Naive thymus-derived CD4-positive, alpha-beta T cell (primary cell): ENCODE measurements at regions of chr17 and their contacts with region 1.

Region 1: GRCh38 chr17:16215273-16215964 is at the start of gene NCOR1:
- DNase-seq: peak; percentile 76 to 89 (median 82)
- ATAC-seq: peak; percentile 93
- H3K4me3 ChIP-seq: peak within 1 kb of the TSS; percentile 76
- H3K4me3 Mint-ChIP-seq: peak within 1 kb of the TSS; percentile 89 to 99 (median 96)
- H3K27ac ChIP-seq: peak within 1 kb of the TSS; percentile 91
- H3K27ac Mint-ChIP-seq: peak within 1 kb of the TSS; percentile 58 to 98 (median 93)
- H3K4me1 ChIP-seq: peaks cover 22 to 29% of the 10 kb centered on the region in 2 donors
- H3K4me1 Mint-ChIP-seq: peaks cover 25 to 69% (median 50%) of the 10 kb centered on the region in 7 donors
- H3K27me3 ChIP-seq: no peaks in the 10 kb centered on the region
- H3K27me3 Mint-ChIP-seq: no peaks in the 10 kb centered on the region
- total RNA-seq, gene NCOR1: 131 to 169 (median 149) TPM

Region 2: GRCh38 chr17:16181581-16181980 is 33.8 kb before region 1 on chr17:
- CTCF ChIA-PET with region 1: no interaction called
- POLR2A ChIA-PET with region 1: no interaction called
- intact Hi-C with region 1: loop called in 1 of 2 experiments (anchors 5 kb)
- DNase-seq: no peak
- ATAC-seq: no peak
- H3K4me3 ChIP-seq: no peak overlapping the region
- H3K4me3 Mint-ChIP-seq: no peak overlapping the region
- H3K27ac ChIP-seq: no peak overlapping the region
- H3K27ac Mint-ChIP-seq: no peak overlapping the region
- H3K4me1 ChIP-seq: no peaks in the 10 kb centered on the region
- H3K4me1 Mint-ChIP-seq: peaks cover 21 to 67% (median 56%) of the 10 kb centered on the region in 7 donors
- H3K27me3 ChIP-seq: no peaks in the 10 kb centered on the region
- H3K27me3 Mint-ChIP-seq: no peaks in the 10 kb centered on the region

Region 3: DNA sequence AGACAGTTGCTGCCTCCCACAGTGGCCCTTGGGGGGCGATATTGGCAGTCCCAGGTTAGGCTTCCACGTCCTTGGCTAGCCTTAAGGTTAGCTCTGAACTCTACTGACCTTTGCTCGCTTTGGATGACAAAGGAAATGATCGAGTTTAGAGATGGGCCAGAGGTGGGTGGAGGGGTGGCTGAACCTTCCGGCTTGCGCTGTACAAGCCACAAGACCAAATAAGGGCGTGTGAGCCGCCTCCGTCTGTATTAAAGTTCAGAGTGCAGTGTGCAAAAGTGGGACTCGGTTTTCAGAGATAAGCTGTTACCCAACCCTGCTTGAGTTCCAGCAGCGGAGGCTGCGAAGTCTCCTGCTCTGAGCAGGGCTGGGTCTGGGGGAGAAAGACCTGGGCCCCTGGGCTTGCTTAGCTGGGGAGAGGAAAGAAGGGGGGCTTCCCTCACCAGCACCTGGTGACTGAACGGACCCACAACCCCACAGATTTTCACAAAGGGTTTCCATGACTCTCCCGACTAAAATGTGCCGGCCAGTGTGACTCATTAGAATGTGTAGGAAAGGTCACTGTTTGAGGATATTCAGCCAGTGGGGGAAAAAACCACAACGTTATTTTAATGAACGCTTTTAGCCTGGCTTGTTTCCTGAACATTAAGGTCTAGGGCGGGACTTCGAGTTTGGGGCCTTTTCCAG is 70.7 kb after region 1 on chr17:
- CTCF ChIA-PET with region 1: no interaction called
- POLR2A ChIA-PET with region 1: interaction called, 10 read pairs
- intact Hi-C with region 1: loop called (anchors 1 to 2 kb)
- DNase-seq: peak; percentile 41 to 76 (median 72)
- ATAC-seq: peak; percentile 95
- H3K4me3 ChIP-seq: peak overlapping the region; percentile 53
- H3K4me3 Mint-ChIP-seq: peak overlapping the region; percentile 71 to 85 (median 80)
- H3K27ac ChIP-seq: peak overlapping the region; percentile 81
- H3K27ac Mint-ChIP-seq: peak overlapping the region; percentile 93 to 99 (median 97)
- H3K4me1 ChIP-seq: peaks cover 36 to 50% of the 10 kb centered on the region in 2 donors
- H3K4me1 Mint-ChIP-seq: peaks cover 41 to 68% (median 62%) of the 10 kb centered on the region in 7 donors
- H3K27me3 ChIP-seq: no peaks in the 10 kb centered on the region
- H3K27me3 Mint-ChIP-seq: no peaks in the 10 kb centered on the region

Region 4: DNA sequence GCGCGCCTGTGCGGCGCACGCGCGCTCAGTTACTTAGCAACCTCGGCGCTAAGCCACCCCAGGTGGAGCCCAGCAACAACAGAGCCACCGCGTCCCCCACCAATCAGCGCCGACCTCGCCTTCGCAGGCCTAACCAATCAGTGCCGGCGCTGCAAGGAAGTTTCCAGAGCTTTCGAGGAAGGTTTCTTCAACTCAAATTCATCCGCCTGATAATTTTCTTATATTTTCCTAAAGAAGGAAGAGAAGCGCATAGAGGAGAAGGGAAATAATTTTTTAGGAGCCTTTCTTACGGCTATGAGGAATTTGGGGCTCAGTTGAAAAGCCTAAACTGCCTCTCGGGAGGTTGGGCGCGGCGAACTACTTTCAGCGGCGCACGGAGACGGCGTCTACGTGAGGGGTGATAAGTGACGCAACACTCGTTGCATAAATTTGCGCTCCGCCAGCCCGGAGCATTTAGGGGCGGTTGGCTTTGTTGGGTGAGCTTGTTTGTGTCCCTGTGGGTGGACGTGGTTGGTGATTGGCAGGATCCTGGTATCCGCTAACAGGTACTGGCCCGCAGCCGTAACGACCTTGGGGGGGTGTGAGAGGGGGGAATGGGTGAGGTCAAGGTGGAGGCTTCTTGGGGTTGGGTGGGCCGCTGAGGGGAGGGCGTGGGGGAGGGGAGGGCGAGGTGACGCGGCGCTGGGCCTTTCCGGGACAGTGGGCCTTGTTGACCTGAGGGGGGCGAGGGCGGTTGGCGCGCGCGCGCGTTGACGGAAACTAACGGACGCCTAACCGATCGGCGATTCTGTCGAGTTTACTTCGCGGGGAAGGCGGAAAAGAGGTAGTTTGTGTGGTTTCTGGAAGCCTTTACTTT is 165.4 kb after region 1 on chr17 and contains the start of gene UBB:
- CTCF ChIA-PET with region 1: interaction called, 3 read pairs
- POLR2A ChIA-PET with region 1: interaction called, 10 read pairs
- intact Hi-C with region 1: loop called (anchors 1 kb)
- DNase-seq: peak; percentile 83 to 97 (median 94)
- ATAC-seq: peak; percentile 96
- H3K4me3 ChIP-seq: peak within 1 kb of the TSS; percentile 66
- H3K4me3 Mint-ChIP-seq: peak within 1 kb of the TSS; percentile 85 to 99 (median 95)
- H3K27ac ChIP-seq: peak within 1 kb of the TSS; percentile 86
- H3K27ac Mint-ChIP-seq: peak within 1 kb of the TSS; percentile 93 to 100 (median 97)
- H3K4me1 ChIP-seq: peaks cover 6 to 13% of the 10 kb centered on the region in 2 donors
- H3K4me1 Mint-ChIP-seq: peaks cover 22 to 48% (median 39%) of the 10 kb centered on the region in 7 donors
- H3K27me3 ChIP-seq: no peaks in the 10 kb centered on the region
- H3K27me3 Mint-ChIP-seq: peaks cover 0 to 5% (median 0%) of the 10 kb centered on the region in 5 donors
- total RNA-seq, gene UBB: 537 to 1,283 (median 621) TPM

Region 5: GRCh38 chr17:16438557-16439302 is 223.3 kb after region 1 on chr17:
- CTCF ChIA-PET with region 1: no interaction called
- POLR2A ChIA-PET with region 1: no interaction called
- intact Hi-C with region 1: loop called (anchors 1 to 2 kb)
- DNase-seq: peak; percentile 81 to 97 (median 95)
- ATAC-seq: peak; percentile 93
- H3K4me3 ChIP-seq: peak overlapping the region; percentile 89
- H3K4me3 Mint-ChIP-seq: peak overlapping the region; percentile 91 to 100 (median 100)
- H3K27ac ChIP-seq: peak overlapping the region; percentile 92
- H3K27ac Mint-ChIP-seq: peak overlapping the region; percentile 91 to 100 (median 99)
- H3K4me1 ChIP-seq: peaks cover 27 to 41% of the 10 kb centered on the region in 2 donors
- H3K4me1 Mint-ChIP-seq: peaks cover 30 to 55% (median 47%) of the 10 kb centered on the region in 7 donors
- H3K27me3 ChIP-seq: no peaks in the 10 kb centered on the region
- H3K27me3 Mint-ChIP-seq: no peaks in the 10 kb centered on the region

Region 6: DNA sequence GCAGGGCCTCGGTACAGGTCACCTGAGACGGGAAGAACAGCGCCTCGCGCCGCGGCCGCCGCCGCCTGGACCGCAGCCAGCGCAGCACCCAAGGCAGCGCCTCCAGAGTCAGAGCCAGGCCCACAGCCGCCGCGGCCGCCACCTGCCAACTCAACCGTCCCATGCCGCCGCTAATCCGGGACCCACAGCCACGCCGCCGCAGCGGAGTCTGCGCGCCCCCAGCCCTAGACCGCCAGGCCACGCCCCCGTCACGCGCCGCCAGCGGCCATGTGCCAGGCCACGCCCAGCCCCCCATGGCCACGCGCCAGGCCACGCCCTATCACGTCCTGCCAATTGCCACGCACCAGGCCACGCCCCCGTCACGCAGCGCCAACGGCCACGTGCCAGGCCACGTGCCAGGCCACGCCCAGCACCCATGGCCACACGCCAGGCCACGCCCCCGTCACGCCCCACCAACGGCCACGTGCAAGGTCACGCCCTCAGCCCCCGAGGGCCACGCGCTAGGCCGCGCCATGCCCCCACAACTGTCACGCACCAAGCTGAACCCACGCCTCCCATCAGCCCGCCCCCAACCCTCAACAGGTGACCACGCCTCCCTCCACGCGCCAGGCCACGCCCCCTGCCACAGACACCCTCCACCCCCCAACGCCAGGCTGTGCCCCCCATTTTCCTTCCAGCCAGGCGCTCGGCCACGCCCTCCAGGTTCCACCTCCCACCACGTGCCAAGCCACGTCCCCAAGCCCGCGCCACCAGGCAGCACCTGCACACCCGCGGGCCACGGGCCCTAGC is 990.9 kb after region 1 on chr17 and contains the start of gene PLD6:
- CTCF ChIA-PET with region 1: no interaction called
- POLR2A ChIA-PET with region 1: no interaction called
- intact Hi-C with region 1: loop called in 1 of 2 experiments (anchors 5 kb)
- DNase-seq: peak; percentile 88 to 96 (median 93)
- ATAC-seq: peak; percentile 92
- H3K4me3 ChIP-seq: peak within 1 kb of the TSS; percentile 68
- H3K4me3 Mint-ChIP-seq: peak within 1 kb of the TSS; percentile 87 to 93 (median 89)
- H3K27ac ChIP-seq: peak within 1 kb of the TSS; percentile 70
- H3K27ac Mint-ChIP-seq: peak within 1 kb of the TSS; percentile 75 to 96 (median 91)
- H3K4me1 ChIP-seq: peaks cover 17 to 30% of the 10 kb centered on the region in 2 donors
- H3K4me1 Mint-ChIP-seq: peaks cover 12 to 32% (median 19%) of the 10 kb centered on the region in 7 donors
- H3K27me3 ChIP-seq: no peaks in the 10 kb centered on the region
- H3K27me3 Mint-ChIP-seq: no peaks in the 10 kb centered on the region
- total RNA-seq, gene PLD6: 6.2 to 13.9 (median 12.1) TPM